ENCODE measurements at regions of chr4 and their contacts with region 1.

Region 1: GRCh38 chr4:2186133-2186864 is 55.6 kb downstream of the HAUS3 start:
- DNase-seq: no peak
- ATAC-seq: peak in 2 of 4 donors; percentile 48 to 60
- H3K4me3 ChIP-seq: no peak overlapping the region
- H3K27ac ChIP-seq: no peak overlapping the region
- H3K4me1 ChIP-seq: no peaks in the 10 kb centered on the region
- H3K27me3 ChIP-seq: no peaks in the 10 kb centered on the region
- CTCF ChIP-seq: peak; percentile 35

Region 2: DNA sequence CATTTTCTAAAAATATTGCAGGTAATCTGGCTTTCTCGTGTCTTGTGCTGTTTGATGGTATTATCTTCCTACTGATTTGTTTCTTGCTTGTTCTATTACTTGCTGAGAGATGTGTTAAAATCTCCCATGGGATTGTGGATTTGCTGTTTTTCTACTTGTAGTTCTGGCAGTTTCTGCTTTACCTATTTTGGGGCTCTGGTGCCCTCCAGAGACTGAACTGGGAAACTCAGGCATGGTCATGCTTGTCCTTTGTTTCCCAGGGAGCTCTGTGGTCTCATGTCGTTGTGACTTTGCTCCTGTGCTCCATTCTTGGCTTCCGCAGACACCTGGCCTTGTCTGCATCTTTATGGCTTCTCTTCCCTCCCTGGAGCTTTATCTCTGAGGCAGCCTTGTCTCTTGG is 275.7 kb before region 1 on chr4:
- intact Hi-C with region 1: loop called (anchors 5 to 10 kb)
- DNase-seq: no peak
- ATAC-seq: peak in 2 of 4 donors; percentile 41 to 46
- H3K4me3 ChIP-seq: no peak overlapping the region
- H3K27ac ChIP-seq: no peak overlapping the region
- H3K4me1 ChIP-seq: no peaks in the 10 kb centered on the region
- H3K27me3 ChIP-seq: no peaks in the 10 kb centered on the region
- CTCF ChIP-seq: peak; percentile 33

Region 3: GRCh38 chr4:1992468-1993168 is 193.7 kb before region 1 on chr4:
- intact Hi-C with region 1: loop called in 1 of 2 experiments (anchors 10 kb)
- DNase-seq: peak in 1 of 2 donors; percentile 63
- ATAC-seq: peak; percentile 42 to 75 (median 58)
- H3K4me3 ChIP-seq: no peak overlapping the region
- H3K27ac ChIP-seq: no peak overlapping the region
- H3K4me1 ChIP-seq: no peaks in the 10 kb centered on the region
- H3K27me3 ChIP-seq: no peaks in the 10 kb centered on the region
- CTCF ChIP-seq: no peak

Region 4: DNA sequence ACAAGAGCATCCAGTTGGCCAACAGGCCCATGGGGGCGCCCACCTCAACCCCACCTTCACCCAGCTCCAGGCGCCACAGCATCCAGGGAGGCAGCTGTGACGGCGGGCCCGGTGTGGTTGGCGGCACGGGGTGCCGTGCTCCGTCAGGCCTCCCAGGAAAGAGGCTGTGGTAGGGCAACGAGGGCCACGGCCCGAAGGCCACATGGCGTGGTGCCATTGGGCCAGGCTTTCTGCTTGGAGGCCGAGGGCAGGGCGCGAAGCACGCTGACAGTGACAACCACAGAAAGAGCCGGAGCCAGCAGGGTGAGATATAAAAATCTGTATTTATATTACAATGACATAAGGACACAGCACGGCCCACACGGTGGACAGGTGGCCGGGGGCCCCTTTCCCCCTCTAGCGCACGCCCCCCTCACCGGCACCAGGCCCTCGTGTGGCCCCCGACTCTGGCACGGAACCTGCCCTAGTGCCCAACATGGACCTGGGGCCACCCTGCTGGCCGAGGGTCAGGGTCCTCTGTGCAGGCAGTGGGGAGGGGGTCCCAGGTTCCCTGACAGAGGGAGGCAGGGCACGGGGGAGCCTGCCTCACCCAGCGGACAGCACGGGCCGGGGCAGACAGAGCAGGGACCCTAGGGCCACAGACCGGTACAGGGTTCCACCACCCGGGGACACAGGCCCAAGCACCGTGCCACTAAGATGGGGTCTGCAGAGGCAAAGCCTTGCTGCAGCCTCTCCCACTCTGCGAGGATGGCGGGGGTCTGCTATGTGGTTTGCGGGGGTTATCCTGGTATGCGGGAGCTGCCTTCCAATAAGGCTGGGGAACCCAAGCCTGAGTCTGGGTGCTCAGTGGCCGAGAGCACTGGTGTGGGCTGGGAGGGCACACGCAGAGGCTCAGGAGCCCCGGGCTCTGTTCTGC is 61.1 kb after region 1 on chr4:
- intact Hi-C with region 1: no loop called
- DNase-seq: peak; percentile 17 to 48
- ATAC-seq: peak in 1 of 4 donors; percentile 8
- H3K4me3 ChIP-seq: no peak overlapping the region
- H3K27ac ChIP-seq: no peak overlapping the region
- H3K4me1 ChIP-seq: peaks cover 13% of the 10 kb centered on the region
- H3K27me3 ChIP-seq: no peaks in the 10 kb centered on the region
- CTCF ChIP-seq: no peak